Mammary epithelial cell (primary cell): ENCODE measurements at regions of chr2 and their contacts with region 1.

Region 1: GRCh38 chr2:238784671-238785527 is 63.0 kb upstream of the TWIST2 start:
- DNase-seq: peak; percentile 34
- H3K4me3 ChIP-seq: no peak overlapping the region
- H3K27ac ChIP-seq: no peak overlapping the region
- H3K4me1 ChIP-seq: no peaks in the 10 kb centered on the region
- H3K27me3 ChIP-seq: no peaks in the 10 kb centered on the region
- CTCF ChIP-seq: peak; percentile 90 to 94

Region 2: DNA sequence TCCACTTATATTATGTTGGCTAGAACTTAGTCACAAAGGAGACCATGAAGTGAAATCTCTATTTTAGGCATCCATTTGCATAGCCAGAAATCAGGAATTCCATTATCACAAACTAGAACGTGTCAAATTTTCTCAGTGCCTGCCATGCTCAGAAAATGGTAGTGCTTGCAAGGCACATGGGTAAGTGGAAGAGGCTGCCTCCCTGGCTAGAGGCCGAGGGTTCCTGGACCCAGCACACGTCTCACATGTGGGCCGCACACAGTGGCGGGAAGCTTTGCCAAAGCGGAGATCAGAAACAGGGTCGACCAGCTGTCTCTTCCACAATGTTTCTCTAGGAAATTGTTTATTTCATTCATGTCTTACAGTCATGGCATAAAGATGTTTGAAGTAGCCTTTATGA is 422.3 kb before region 1 on chr2:
- CTCF ChIA-PET with region 1: no interaction called
- dilution Hi-C with region 1: no loop called
- in situ Hi-C with region 1: loop called in 1 of 2 experiments (anchors 25 kb)
- intact Hi-C with region 1: loop called (anchors 1 kb)
- DNase-seq: no peak
- H3K4me3 ChIP-seq: no peak overlapping the region
- H3K27ac ChIP-seq: no peak overlapping the region
- H3K4me1 ChIP-seq: no peaks in the 10 kb centered on the region
- H3K27me3 ChIP-seq: no peaks in the 10 kb centered on the region
- CTCF ChIP-seq: no peak

Region 3: GRCh38 chr2:238438856-238439849 is 345.7 kb before region 1 on chr2:
- CTCF ChIA-PET with region 1: no interaction called
- dilution Hi-C with region 1: no loop called
- in situ Hi-C with region 1: no loop called
- intact Hi-C with region 1: no loop called
- DNase-seq: peak; percentile 100
- H3K4me3 ChIP-seq: peak overlapping the region; percentile 6 to 29 (median 22)
- H3K27ac ChIP-seq: peak overlapping the region; percentile 97
- H3K4me1 ChIP-seq: peaks cover 29% of the 10 kb centered on the region
- H3K27me3 ChIP-seq: no peaks in the 10 kb centered on the region
- CTCF ChIP-seq: no peak

Region 4: GRCh38 chr2:238462782-238463396 is 322.0 kb before region 1 on chr2:
- CTCF ChIA-PET with region 1: no interaction called
- dilution Hi-C with region 1: no loop called
- in situ Hi-C with region 1: no loop called
- intact Hi-C with region 1: loop called (anchors 5 kb)
- DNase-seq: peak; percentile 61
- H3K4me3 ChIP-seq: no peak overlapping the region
- H3K27ac ChIP-seq: no peak overlapping the region
- H3K4me1 ChIP-seq: peaks cover 16% of the 10 kb centered on the region
- H3K27me3 ChIP-seq: no peaks in the 10 kb centered on the region
- CTCF ChIP-seq: peak; percentile 73

Region 5: GRCh38 chr2:238714038-238714528 is 70.8 kb before region 1 on chr2:
- CTCF ChIA-PET with region 1: no interaction called
- dilution Hi-C with region 1: loop called (anchors 5 kb)
- in situ Hi-C with region 1: loop called in 1 of 2 experiments (anchors 10 kb)
- intact Hi-C with region 1: no loop called
- DNase-seq: no peak
- H3K4me3 ChIP-seq: no peak overlapping the region
- H3K27ac ChIP-seq: no peak overlapping the region
- H3K4me1 ChIP-seq: no peaks in the 10 kb centered on the region
- H3K27me3 ChIP-seq: no peaks in the 10 kb centered on the region
- CTCF ChIP-seq: no peak

Region 6: GRCh38 chr2:238945433-238946150 is 160.7 kb after region 1 on chr2:
- CTCF ChIA-PET with region 1: no interaction called
- dilution Hi-C with region 1: no loop called
- in situ Hi-C with region 1: no loop called
- intact Hi-C with region 1: loop called (anchors 2 kb)
- DNase-seq: no peak
- H3K4me3 ChIP-seq: no peak overlapping the region
- H3K27ac ChIP-seq: no peak overlapping the region
- H3K4me1 ChIP-seq: peaks cover 55% of the 10 kb centered on the region
- H3K27me3 ChIP-seq: no peaks in the 10 kb centered on the region
- CTCF ChIP-seq: peak; percentile 77 to 93

Region 7: GRCh38 chr2:239106314-239106908 is 321.5 kb after region 1 on chr2:
- CTCF ChIA-PET with region 1: no interaction called
- dilution Hi-C with region 1: no loop called
- in situ Hi-C with region 1: no loop called
- intact Hi-C with region 1: loop called (anchors 2 kb)
- DNase-seq: peak; percentile 43
- H3K4me3 ChIP-seq: no peak overlapping the region
- H3K27ac ChIP-seq: no peak overlapping the region
- H3K4me1 ChIP-seq: peaks cover 9% of the 10 kb centered on the region
- H3K27me3 ChIP-seq: no peaks in the 10 kb centered on the region
- CTCF ChIP-seq: peak; percentile 45 to 77